GM12878 (cell line): ENCODE measurements at regions of chr16 and their contacts with region 1.

Region 1: GRCh38 chr16:58843675-58844074 is 109.6 kb upstream of the GOT2 start:
- DNase-seq: peak; percentile 12
- ATAC-seq: peak; percentile 81
- H3K4me3 ChIP-seq: no peak overlapping the region
- H3K27ac ChIP-seq: no peak overlapping the region
- H3K4me1 ChIP-seq: no peaks in the 10 kb centered on the region
- H3K27me3 ChIP-seq: no peaks in the 10 kb centered on the region
- CTCF ChIP-seq: peak in 1 of 3 experiments; percentile 12; a peak in 1 of 6 replicates
- EP300 ChIP-seq: no peak
- POLR2A ChIP-seq: no peak
- RAD21 ChIP-seq: peak; percentile 66

Region 2: GRCh38 chr16:58814348-58814801 is 29.3 kb before region 1 on chr16:
- CTCF ChIA-PET with region 1: interaction called, 45 read pairs
- POLR2A ChIA-PET with region 1: no interaction called
- RAD21 ChIA-PET with region 1: interaction called, 4 read pairs
- SMC1A ChIA-PET with region 1: interaction called, 4 read pairs
- in situ Hi-C with region 1: no loop called
- intact Hi-C with region 1: no loop called
- DNase-seq: no peak
- ATAC-seq: peak; percentile 87
- H3K4me3 ChIP-seq: no peak overlapping the region
- H3K27ac ChIP-seq: no peak overlapping the region
- H3K4me1 ChIP-seq: no peaks in the 10 kb centered on the region
- H3K27me3 ChIP-seq: no peaks in the 10 kb centered on the region
- CTCF ChIP-seq: peak; percentile 85 to 88 (median 88)
- EP300 ChIP-seq: no peak
- POLR2A ChIP-seq: no peak
- RAD21 ChIP-seq: peak; percentile 88

Region 3: DNA sequence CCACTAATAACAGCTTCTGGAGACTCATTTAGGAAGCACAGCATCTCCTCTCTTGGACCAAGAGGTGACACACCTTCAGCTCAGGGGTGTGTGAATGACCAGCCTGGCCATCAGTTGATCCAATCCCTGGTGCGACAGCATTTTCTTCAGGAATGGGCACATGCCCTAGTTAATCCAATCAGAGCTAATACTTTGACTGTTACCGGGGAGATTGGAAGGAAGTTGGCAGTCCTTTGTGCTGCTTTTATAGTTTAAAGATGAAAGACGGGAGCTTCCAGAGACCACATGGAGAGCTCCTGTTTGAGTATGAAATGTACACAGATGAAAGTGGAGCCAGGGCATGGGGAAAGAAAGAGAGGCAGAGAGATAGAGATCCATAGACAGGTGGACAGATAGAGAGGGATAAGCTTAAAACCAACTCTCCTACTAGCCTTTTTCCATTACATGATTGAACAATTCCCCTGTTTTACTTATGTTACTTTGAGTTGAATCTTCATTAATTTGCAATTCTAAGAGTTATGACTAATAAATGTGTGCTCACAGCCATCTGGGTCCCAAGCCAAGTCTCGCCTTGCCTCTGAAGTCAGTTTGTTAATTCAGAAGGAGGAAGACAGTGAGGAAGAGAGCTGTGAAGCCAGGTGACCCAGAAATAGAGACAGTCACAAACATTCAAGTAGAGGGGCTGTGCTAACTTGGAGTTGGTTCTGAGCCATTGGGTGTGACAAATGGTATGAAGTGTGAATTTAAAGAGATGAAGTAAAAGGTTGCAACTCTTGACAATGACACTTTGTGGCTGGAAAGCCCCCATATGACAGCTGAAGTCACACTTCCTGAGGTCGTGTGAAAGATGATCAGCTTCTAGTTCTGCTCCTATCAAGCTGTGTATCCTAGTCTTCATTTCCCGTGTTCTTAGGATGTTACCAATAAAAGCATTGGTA is 10.4 kb after region 1 on chr16:
- CTCF ChIA-PET with region 1: interaction called, 55 read pairs
- POLR2A ChIA-PET with region 1: interaction called, 4 read pairs
- RAD21 ChIA-PET with region 1: interaction called, 29 read pairs
- SMC1A ChIA-PET with region 1: interaction called, 38 read pairs
- in situ Hi-C with region 1: no loop called
- intact Hi-C with region 1: no loop called
- DNase-seq: peak; percentile 46
- ATAC-seq: peak; percentile 93
- H3K4me3 ChIP-seq: no peak overlapping the region
- H3K27ac ChIP-seq: peak overlapping the region; percentile 50
- H3K4me1 ChIP-seq: peaks cover 7% of the 10 kb centered on the region
- H3K27me3 ChIP-seq: no peaks in the 10 kb centered on the region
- CTCF ChIP-seq: no peak
- EP300 ChIP-seq: peak in 1 of 2 experiments; percentile 48; a peak in 1 of 4 replicates
- POLR2A ChIP-seq: no peak
- RAD21 ChIP-seq: no peak

Region 4: DNA sequence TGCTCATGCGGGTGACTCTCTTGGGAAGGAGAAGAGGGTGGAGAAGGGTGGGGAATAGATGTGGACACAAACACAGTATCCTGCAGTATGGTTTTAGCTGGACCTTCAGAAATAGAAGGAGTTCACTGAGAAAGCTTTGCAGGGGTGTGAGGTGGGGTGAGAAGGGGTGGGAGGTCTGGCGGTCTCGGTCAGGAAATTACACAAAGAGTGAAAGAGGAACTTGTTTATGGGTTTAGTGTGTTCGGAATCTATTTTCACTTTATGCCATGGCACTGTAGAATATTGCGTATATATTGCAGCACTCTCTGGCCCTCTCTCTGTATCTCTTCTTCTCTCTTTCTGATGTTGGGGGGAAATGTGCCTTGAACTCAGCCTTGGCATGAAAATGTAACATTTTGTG is 38.6 kb after region 1 on chr16:
- CTCF ChIA-PET with region 1: interaction called, 22 read pairs
- POLR2A ChIA-PET with region 1: no interaction called
- RAD21 ChIA-PET with region 1: interaction called, 13 read pairs
- SMC1A ChIA-PET with region 1: interaction called, 27 read pairs
- in situ Hi-C with region 1: no loop called
- intact Hi-C with region 1: no loop called
- DNase-seq: peak; percentile 31
- ATAC-seq: peak; percentile 96
- H3K4me3 ChIP-seq: no peak overlapping the region
- H3K27ac ChIP-seq: no peak overlapping the region
- H3K4me1 ChIP-seq: peaks cover 5% of the 10 kb centered on the region; the same call in 1 of the 2 replicates
- H3K27me3 ChIP-seq: no peaks in the 10 kb centered on the region
- CTCF ChIP-seq: no peak
- EP300 ChIP-seq: peak in 1 of 2 experiments; percentile 69; a peak in 1 of 4 replicates
- POLR2A ChIP-seq: no peak
- RAD21 ChIP-seq: no peak

Region 5: DNA sequence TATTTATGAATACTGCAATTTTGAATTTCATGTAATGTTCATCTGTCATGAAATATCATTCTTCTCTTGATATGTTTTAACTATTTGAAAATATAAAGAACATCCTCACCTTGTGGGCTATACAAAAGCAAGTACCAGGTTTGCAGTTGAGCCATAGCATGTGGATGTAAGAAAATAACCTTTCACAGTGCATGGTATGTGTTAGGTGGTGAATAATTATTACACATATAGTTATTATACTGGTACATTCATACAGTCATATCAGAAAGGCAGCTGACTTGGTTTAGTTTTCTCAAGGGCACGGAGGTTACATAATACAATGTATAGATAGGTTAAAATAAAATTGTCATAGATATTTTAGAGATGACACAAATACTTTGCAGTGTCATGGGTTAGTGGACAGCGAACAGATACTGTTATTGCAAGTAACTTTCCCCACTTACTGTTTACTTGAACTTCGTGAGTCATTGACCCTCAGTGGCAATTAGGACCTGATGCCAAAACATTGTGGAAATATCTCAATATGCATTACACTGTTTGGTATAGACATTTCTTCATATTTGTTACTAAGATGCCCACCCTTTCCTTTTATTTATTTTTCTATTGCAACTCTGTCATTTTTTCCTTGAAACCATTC is 335.9 kb after region 1 on chr16:
- CTCF ChIA-PET with region 1: interaction called, 3 read pairs
- POLR2A ChIA-PET with region 1: no interaction called
- RAD21 ChIA-PET with region 1: no interaction called
- SMC1A ChIA-PET with region 1: no interaction called
- in situ Hi-C with region 1: no loop called
- intact Hi-C with region 1: loop called (anchors 10 kb)
- DNase-seq: no peak
- ATAC-seq: no peak
- H3K4me3 ChIP-seq: no peak overlapping the region
- H3K27ac ChIP-seq: no peak overlapping the region
- H3K4me1 ChIP-seq: no peaks in the 10 kb centered on the region
- H3K27me3 ChIP-seq: no peaks in the 10 kb centered on the region
- CTCF ChIP-seq: no peak
- EP300 ChIP-seq: no peak
- POLR2A ChIP-seq: no peak
- RAD21 ChIP-seq: no peak

Region 6: GRCh38 chr16:59635674-59636073 is 792.0 kb after region 1 on chr16:
- CTCF ChIA-PET with region 1: no interaction called
- POLR2A ChIA-PET with region 1: no interaction called
- RAD21 ChIA-PET with region 1: no interaction called
- SMC1A ChIA-PET with region 1: no interaction called
- in situ Hi-C with region 1: no loop called
- intact Hi-C with region 1: no loop called
- DNase-seq: no peak
- ATAC-seq: no peak
- H3K4me3 ChIP-seq: no peak overlapping the region
- H3K27ac ChIP-seq: no peak overlapping the region
- H3K4me1 ChIP-seq: no peaks in the 10 kb centered on the region
- H3K27me3 ChIP-seq: no peaks in the 10 kb centered on the region
- CTCF ChIP-seq: no peak
- EP300 ChIP-seq: no peak
- POLR2A ChIP-seq: no peak
- RAD21 ChIP-seq: no peak

Region 7: DNA sequence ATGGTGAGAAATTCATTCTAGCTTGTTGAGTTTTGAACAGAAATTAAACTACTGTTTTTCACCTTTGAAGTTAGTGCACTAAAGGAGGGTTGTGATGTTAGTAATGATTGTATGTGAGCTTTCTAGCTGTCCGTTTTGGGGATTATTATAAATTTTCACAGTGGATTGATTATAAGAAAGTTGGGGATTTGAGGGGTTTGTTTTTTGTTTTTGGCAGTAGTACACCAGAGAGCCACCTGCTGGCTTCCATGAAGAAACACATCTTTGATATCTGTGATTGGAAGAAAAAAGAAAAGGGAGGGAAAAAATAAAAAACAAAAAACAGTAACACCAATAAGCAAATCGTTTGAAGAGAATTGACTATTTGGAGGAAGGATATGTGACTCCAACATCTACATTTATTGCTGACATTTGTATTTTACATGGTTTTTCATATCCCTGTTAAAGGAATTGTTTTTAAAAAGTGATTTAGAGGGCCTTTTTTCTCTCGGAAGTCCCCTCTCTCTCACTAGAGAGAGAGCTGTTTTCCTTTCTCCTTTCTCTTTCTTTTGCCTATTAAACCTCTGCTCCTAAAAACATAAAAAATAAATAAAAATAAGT is 1360.0 kb after region 1 on chr16:
- CTCF ChIA-PET with region 1: interaction called, 3 read pairs
- POLR2A ChIA-PET with region 1: no interaction called
- RAD21 ChIA-PET with region 1: interaction called, 3 read pairs
- SMC1A ChIA-PET with region 1: no interaction called
- in situ Hi-C with region 1: no loop called
- intact Hi-C with region 1: loop called (anchors 10 kb)
- DNase-seq: no peak
- ATAC-seq: no peak
- H3K4me3 ChIP-seq: no peak overlapping the region
- H3K27ac ChIP-seq: no peak overlapping the region
- H3K4me1 ChIP-seq: no peaks in the 10 kb centered on the region
- H3K27me3 ChIP-seq: no peaks in the 10 kb centered on the region
- CTCF ChIP-seq: peak in 1 of 3 experiments; percentile 20; a peak in 1 of 6 replicates
- EP300 ChIP-seq: no peak
- POLR2A ChIP-seq: no peak
- RAD21 ChIP-seq: no peak